Activated T-helper 1 cell treated with anti-CD3 and anti-CD28 coated beads, Interleukin-12 subunit alpha, Interleukin-12 subunit beta, Interleukin-2, Interleukin-4 antibody, amounts not matched to agents 30 ng/mL and 10 ng/mL and 1 ng/mL, durations not matched to agents 14 hours and 24 hours and 36 hours (primary cell): ENCODE measurements at regions of chr3 and their contacts with region 1.

Region 1: GRCh38 chr3:25648107-25648535 is 16.6 kb downstream of the TOP2B start:
- DNase-seq: peak; percentile 71
- H3K4me3 Mint-ChIP-seq: no peak overlapping the region
- H3K27ac Mint-ChIP-seq: peak overlapping the region; percentile 14
- H3K4me1 Mint-ChIP-seq: peaks cover 22% of the 10 kb centered on the region
- H3K27me3 Mint-ChIP-seq: no peaks in the 10 kb centered on the region

Region 2: GRCh38 chr3:25713335-25713985 is 65.3 kb after region 1 on chr3:
- intact Hi-C with region 1: no loop called
- DNase-seq: no peak
- H3K4me3 Mint-ChIP-seq: no peak overlapping the region
- H3K27ac Mint-ChIP-seq: no peak overlapping the region
- H3K4me1 Mint-ChIP-seq: no peaks in the 10 kb centered on the region
- H3K27me3 Mint-ChIP-seq: peaks cover 1% of the 10 kb centered on the region

Region 3: GRCh38 chr3:25723802-25724201 is 75.7 kb after region 1 on chr3:
- intact Hi-C with region 1: loop called (anchors 5 kb)
- DNase-seq: no peak
- H3K4me3 Mint-ChIP-seq: no peak overlapping the region
- H3K27ac Mint-ChIP-seq: no peak overlapping the region
- H3K4me1 Mint-ChIP-seq: peaks cover 10% of the 10 kb centered on the region
- H3K27me3 Mint-ChIP-seq: no peaks in the 10 kb centered on the region

Region 4: GRCh38 chr3:25801786-25802185 is 153.7 kb after region 1 on chr3:
- intact Hi-C with region 1: no loop called
- DNase-seq: no peak
- H3K4me3 Mint-ChIP-seq: no peak overlapping the region
- H3K27ac Mint-ChIP-seq: no peak overlapping the region
- H3K4me1 Mint-ChIP-seq: no peaks in the 10 kb centered on the region
- H3K27me3 Mint-ChIP-seq: peaks cover 4% of the 10 kb centered on the region

Region 5: GRCh38 chr3:25831578-25831977 is 183.5 kb after region 1 on chr3:
- intact Hi-C with region 1: loop called (anchors 1 kb)
- DNase-seq: no peak
- H3K4me3 Mint-ChIP-seq: no peak overlapping the region
- H3K27ac Mint-ChIP-seq: no peak overlapping the region
- H3K4me1 Mint-ChIP-seq: no peaks in the 10 kb centered on the region
- H3K27me3 Mint-ChIP-seq: peaks cover 13% of the 10 kb centered on the region

Region 6: GRCh38 chr3:25910997-25911396 is 262.9 kb after region 1 on chr3:
- intact Hi-C with region 1: loop called (anchors 1 kb)
- DNase-seq: no peak
- H3K4me3 Mint-ChIP-seq: no peak overlapping the region
- H3K27ac Mint-ChIP-seq: no peak overlapping the region
- H3K4me1 Mint-ChIP-seq: peaks cover 5% of the 10 kb centered on the region
- H3K27me3 Mint-ChIP-seq: no peaks in the 10 kb centered on the region